Calu3 (cell line): ENCODE measurements at regions of chr6 and their contacts with region 1.

Region 1: GRCh38 chr6:3748208-3749066 is 3.1 kb downstream of the PXDC1 start:
- DNase-seq: peak; percentile 70
- H3K4me3 Mint-ChIP-seq: peak overlapping the region; percentile 85
- H3K27ac Mint-ChIP-seq: peak overlapping the region; percentile 65
- H3K4me1 Mint-ChIP-seq: peaks cover 34% of the 10 kb centered on the region
- H3K27me3 Mint-ChIP-seq: no peaks in the 10 kb centered on the region
- CTCF ChIP-seq: peak; percentile 15

Region 2: GRCh38 chr6:3825851-3826581 is 77.6 kb after region 1 on chr6:
- CTCF ChIA-PET with region 1: interaction called, 5 read pairs
- intact Hi-C with region 1: loop called (anchors 5 kb)
- DNase-seq: peak; percentile 86
- H3K4me3 Mint-ChIP-seq: peak overlapping the region; percentile 52
- H3K27ac Mint-ChIP-seq: peak overlapping the region; percentile 88
- H3K4me1 Mint-ChIP-seq: peaks cover 30% of the 10 kb centered on the region
- H3K27me3 Mint-ChIP-seq: no peaks in the 10 kb centered on the region
- CTCF ChIP-seq: no peak

Region 3: DNA sequence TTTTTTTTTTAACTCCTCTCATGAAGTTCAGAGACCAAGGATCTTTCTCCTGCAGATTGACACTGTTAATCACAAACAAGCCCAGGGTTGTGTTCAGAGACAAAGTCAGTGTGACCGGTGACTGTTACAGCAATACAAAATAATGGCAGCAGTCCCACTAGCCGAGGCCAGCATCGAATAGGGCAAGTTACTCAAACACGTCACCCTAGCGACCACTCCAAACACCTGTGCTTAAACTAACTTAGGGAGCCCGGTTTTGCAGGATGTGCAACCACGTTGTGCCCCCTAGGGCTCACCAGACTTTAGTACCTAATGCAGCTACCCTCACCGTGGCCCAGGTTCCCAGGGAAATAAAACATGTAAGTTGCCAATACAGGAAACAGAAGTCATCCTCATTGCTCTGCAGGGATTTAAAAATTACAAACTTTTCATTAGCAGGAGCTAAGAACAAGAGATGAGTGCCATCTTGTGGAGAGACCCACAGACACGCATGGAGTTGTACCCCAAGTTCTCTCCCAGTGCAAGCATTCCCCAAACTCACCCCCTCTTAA is 138.8 kb after region 1 on chr6:
- CTCF ChIA-PET with region 1: no interaction called
- intact Hi-C with region 1: loop called (anchors 1 kb)
- DNase-seq: peak; percentile 24
- H3K4me3 Mint-ChIP-seq: no peak overlapping the region
- H3K27ac Mint-ChIP-seq: peak overlapping the region; percentile 47
- H3K4me1 Mint-ChIP-seq: peaks cover 23% of the 10 kb centered on the region
- H3K27me3 Mint-ChIP-seq: no peaks in the 10 kb centered on the region
- CTCF ChIP-seq: no peak

Region 4: DNA sequence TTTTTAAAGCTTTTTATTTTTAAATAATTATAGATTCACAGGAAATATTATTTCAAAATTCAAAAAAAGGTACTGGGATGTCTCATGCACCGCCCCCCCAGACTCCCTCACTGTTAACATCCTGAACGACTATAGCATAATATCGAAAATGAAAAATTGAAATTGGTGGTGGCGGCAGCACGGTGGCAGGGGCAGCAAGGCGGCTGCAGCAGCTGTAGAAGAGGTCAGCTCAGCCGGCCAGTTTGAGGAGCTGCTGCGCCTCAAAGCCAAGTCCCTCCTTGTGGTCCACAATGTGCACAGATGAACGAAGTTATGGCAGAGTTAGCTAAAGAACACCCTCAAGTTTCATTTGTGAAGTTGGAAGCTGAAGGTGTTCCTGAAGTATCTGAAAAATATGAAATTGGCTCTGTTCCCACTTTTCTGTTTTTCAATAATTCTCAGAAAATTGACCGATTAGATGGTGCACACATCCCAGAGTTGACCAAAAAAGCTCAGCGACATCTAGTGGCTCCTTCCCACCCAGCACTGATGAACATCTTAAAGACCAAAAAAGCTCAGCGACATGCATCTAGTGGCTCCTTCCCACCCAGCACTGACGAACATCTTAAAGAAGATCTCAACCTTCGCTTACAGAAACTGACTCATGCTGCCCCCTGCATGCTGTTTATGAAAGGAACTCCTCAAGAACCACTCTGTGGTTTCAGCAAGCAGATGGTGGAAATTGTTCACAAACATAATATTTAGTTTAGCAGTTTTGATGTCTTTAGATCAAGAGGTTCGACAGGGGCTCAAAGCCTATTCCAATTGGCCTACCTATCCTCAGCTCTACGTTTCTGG is 229.7 kb after region 1 on chr6:
- CTCF ChIA-PET with region 1: interaction called, 5 read pairs
- intact Hi-C with region 1: loop called (anchors 1 kb)
- DNase-seq: peak; percentile 29
- H3K4me3 Mint-ChIP-seq: no peak overlapping the region
- H3K27ac Mint-ChIP-seq: no peak overlapping the region
- H3K4me1 Mint-ChIP-seq: peaks cover 8% of the 10 kb centered on the region
- H3K27me3 Mint-ChIP-seq: no peaks in the 10 kb centered on the region
- CTCF ChIP-seq: peak; percentile 26